HEK293T (cell line): ENCODE measurements at regions of chr1 and their contacts with region 1.

Region 1: DNA sequence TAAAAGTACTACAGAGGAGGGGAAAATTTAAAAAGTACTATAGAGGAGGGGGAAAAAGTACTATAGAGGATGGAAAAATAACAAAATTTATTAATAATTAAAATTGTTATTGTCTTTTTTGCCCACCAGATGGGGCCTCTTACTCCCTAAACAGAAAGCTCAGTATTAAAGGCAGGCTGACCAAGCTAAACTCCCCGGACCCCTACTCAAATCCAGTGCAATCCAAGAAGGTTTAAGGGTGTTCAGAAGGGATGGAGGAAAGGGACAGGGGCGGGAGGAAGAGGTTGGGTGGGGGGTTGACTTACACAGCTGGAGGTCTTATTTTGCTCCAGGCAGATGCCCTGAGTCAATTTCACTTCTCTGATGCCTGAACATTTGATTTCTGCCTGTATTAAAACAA is 13.7 kb downstream of the CD34 start:
- DNase-seq: no peak

Region 2: GRCh38 chr1:207861442-207862177 is 35.6 kb before region 1 on chr1:
- CTCF ChIA-PET with region 1: no interaction called
- POLR2A ChIA-PET with region 1: no interaction called
- DNase-seq: no peak

Region 3: DNA sequence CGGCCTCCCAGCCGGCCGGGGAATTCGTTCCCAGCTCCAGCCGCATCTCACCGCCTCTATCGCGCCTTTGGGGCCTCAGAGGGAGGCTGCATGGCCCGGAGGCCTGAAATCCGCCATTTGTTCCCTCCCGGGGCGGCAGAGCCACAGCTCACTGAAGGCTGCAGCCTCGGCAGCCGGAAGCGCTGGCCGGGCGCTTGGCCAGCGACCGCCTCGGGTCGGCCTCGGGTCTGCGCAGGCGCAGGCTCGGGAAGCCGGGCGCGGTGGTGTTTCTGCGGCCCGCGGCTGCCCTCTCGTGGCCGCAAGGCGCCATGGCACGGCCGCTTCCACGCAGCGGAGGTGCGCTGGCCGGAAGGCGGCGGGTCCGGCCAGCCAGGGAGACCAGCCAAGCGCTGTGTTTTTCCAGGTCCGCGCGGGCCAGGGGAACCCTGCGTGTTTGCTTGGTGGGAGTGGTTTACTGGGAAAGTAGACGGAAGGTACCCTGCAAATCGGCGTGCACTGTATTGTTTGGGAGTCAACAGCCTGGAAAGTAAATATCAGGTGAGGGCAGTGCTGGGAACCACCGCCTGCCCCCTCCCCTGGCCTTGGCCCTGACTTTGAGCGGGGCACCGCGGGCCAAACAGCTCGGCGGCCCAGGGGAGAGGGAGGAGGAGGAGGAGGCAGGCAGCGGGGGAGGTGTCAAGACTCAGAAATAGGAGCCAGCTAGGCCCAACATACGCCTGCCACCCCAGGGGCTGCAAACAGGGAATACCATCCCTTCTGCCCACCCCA is 66.4 kb after region 1 on chr1:
- CTCF ChIA-PET with region 1: interaction called, 14 read pairs
- POLR2A ChIA-PET with region 1: interaction called, 10 read pairs
- DNase-seq: peak; percentile 99